Endothelial cell of umbilical vein (primary cell): ENCODE measurements at regions of chr13 and their contacts with region 1.

Region 1: DNA sequence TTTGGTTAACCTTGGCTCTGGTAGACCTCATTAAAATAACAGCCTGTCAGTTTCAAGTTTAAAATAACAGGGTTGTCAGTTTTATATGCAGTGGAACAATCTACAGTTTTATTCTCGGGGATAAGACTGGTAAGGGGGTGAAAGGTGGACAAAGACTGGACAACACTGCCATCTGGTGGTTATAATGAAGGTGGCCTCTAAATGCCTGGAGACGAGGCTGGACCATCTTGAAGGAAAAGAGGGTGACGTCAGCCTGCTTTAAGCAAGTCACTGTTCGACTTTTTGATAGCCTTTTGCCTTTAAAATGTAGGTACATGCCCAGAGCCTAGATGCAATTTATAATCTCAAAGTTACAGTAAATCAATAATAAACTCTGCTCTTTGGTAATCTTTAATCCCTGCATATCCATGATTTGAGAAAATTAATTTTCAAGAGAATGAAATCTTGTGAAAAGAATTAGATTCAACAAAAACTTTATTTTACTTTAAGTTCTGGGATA is 117.0 kb downstream of the DCT start:
- DNase-seq: peak; percentile 84
- H3K4me3 ChIP-seq: no peak overlapping the region
- H3K27ac ChIP-seq: no peak overlapping the region
- H3K4me1 ChIP-seq: no peaks in the 10 kb centered on the region
- H3K27me3 ChIP-seq: no peaks in the 10 kb centered on the region
- CTCF ChIP-seq: peak; percentile 69 to 76
- POLR2A ChIP-seq: no peak

Region 2: GRCh38 chr13:93029536-93029935 is 1332.9 kb before region 1 on chr13:
- CTCF ChIA-PET with region 1: no interaction called
- POLR2A ChIA-PET with region 1: no interaction called
- dilution Hi-C with region 1: no loop called
- intact Hi-C with region 1: no loop called
- DNase-seq: no peak
- H3K4me3 ChIP-seq: no peak overlapping the region
- H3K27ac ChIP-seq: no peak overlapping the region
- H3K4me1 ChIP-seq: no peaks in the 10 kb centered on the region
- H3K27me3 ChIP-seq: no peaks in the 10 kb centered on the region
- CTCF ChIP-seq: no peak
- POLR2A ChIP-seq: no peak

Region 3: DNA sequence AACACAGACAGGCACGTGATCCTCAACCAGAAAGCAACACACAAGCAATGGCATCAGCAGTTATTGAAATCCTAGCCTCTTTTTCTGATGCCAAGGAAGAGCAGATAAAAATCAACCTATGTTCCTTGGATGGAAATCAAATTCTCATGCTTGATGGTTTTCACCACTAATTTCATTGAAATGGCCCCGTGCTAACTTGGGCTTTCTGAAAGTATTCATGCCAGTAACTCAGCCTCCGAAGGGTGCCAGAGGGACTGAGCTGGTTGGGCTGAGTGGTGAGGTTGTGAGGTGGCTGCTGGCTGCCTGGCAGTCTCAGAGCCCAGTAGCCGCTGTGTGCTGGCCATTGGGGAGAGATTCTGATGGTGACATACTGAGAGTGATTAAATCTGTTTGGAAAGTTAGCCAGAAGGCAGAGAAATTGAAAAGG is 192.3 kb before region 1 on chr13:
- CTCF ChIA-PET with region 1: no interaction called
- POLR2A ChIA-PET with region 1: no interaction called
- dilution Hi-C with region 1: no loop called
- intact Hi-C with region 1: loop called (anchors 10 kb)
- DNase-seq: no peak
- H3K4me3 ChIP-seq: no peak overlapping the region
- H3K27ac ChIP-seq: no peak overlapping the region
- H3K4me1 ChIP-seq: no peaks in the 10 kb centered on the region
- H3K27me3 ChIP-seq: no peaks in the 10 kb centered on the region
- CTCF ChIP-seq: no peak
- POLR2A ChIP-seq: no peak

Region 4: GRCh38 chr13:94579063-94579462 is 216.6 kb after region 1 on chr13:
- CTCF ChIA-PET with region 1: no interaction called
- POLR2A ChIA-PET with region 1: no interaction called
- dilution Hi-C with region 1: no loop called
- intact Hi-C with region 1: no loop called
- DNase-seq: no peak
- H3K4me3 ChIP-seq: no peak overlapping the region
- H3K27ac ChIP-seq: no peak overlapping the region
- H3K4me1 ChIP-seq: peaks cover 12% of the 10 kb centered on the region
- H3K27me3 ChIP-seq: no peaks in the 10 kb centered on the region
- CTCF ChIP-seq: no peak
- POLR2A ChIP-seq: no peak